A673 (cell line): ENCODE measurements at regions of chr17 and their contacts with region 1.

Region 1: GRCh38 chr17:44095642-44096496 is 25.3 kb downstream of the G6PC3 start:
- DNase-seq: peak; percentile 94
- H3K4me3 ChIP-seq: peak overlapping the region; percentile 24
- H3K27ac ChIP-seq: peak overlapping the region; percentile 97
- H3K4me1 ChIP-seq: peaks cover 25% of the 10 kb centered on the region
- H3K27me3 ChIP-seq: no peaks in the 10 kb centered on the region
- CTCF ChIP-seq: no peak

Region 2: GRCh38 chr17:43857942-43858600 is 237.8 kb before region 1 on chr17:
- CTCF ChIA-PET with region 1: no interaction called
- POLR2A ChIA-PET with region 1: interaction called, 13 read pairs
- intact Hi-C with region 1: no loop called
- DNase-seq: no peak
- H3K4me3 ChIP-seq: no peak overlapping the region
- H3K27ac ChIP-seq: no peak overlapping the region
- H3K4me1 ChIP-seq: no peaks in the 10 kb centered on the region
- H3K27me3 ChIP-seq: no peaks in the 10 kb centered on the region
- CTCF ChIP-seq: no peak

Region 3: DNA sequence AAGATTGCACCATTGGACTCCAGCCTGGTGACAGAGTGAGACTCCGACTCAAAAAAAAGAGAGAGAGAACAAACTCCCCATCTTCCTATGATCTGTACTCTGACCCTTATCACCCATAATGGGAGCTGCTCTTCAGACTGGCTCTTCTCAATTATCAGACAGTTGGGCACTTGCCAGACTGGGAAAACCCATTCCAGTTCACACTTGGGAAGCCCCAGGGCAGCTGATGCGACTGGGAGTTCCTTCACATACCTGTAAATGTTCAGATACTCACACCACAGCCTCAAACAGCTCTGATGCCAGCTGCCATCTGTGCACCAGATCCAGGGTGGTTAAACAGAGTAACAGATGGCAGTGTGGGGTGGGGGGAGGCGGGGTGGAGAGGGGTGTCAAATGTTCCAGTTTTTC is 57.3 kb before region 1 on chr17:
- CTCF ChIA-PET with region 1: no interaction called
- POLR2A ChIA-PET with region 1: no interaction called
- intact Hi-C with region 1: no loop called
- DNase-seq: no peak
- H3K4me3 ChIP-seq: no peak overlapping the region
- H3K27ac ChIP-seq: no peak overlapping the region
- H3K4me1 ChIP-seq: peaks cover 4% of the 10 kb centered on the region
- H3K27me3 ChIP-seq: no peaks in the 10 kb centered on the region
- CTCF ChIP-seq: no peak

Region 4: DNA sequence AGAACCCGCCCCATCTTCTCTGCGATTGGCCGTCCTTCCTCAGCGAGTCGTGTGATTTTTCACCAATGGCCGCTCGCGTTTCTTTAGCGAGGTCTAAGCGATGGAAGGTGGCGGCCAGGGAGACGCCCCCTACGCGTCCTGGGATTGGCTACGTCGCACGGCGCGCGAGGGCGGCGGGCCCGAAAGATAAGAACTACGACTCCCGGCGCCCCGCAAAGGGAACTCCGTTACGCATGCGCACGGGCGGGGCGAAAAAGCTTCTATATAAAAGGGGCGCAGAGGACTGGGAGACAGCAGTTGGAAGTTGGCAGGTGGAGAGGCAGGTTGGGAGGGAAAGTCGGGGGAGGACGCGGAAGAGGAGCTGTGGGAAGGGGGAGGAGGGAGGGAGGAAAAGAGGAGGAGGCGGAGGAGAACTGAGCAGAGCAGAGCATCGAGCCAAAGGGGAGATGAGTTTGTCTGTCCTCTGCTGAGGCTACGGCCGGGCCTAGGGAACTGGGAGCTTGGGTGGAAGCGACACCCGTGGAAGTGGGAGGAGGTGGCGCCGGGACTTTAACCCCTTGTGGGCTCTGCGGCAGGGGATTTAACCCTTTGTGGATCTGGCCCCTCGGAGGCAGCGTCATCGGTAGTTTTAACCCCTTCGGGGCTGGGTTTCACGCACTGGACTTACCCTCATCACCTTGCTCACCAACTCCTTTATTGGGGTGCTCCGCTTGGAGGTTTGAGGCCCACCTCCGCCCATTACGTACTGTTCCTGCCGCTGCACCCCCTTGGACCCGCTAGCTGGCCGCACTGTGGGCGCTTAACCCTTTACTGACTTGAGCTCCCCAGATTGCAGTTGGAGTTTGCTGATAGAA is 1052.5 kb after region 1 on chr17 and contains the start of gene HEXIM1:
- CTCF ChIA-PET with region 1: no interaction called
- POLR2A ChIA-PET with region 1: interaction called, 16 read pairs
- intact Hi-C with region 1: no loop called
- DNase-seq: peak; percentile 98
- H3K4me3 ChIP-seq: peak within 1 kb of the TSS; percentile 81
- H3K27ac ChIP-seq: peak within 1 kb of the TSS; percentile 98
- H3K4me1 ChIP-seq: peaks cover 19% of the 10 kb centered on the region
- H3K27me3 ChIP-seq: no peaks in the 10 kb centered on the region
- CTCF ChIP-seq: no peak
- total RNA-seq, gene HEXIM1: 21.2 and 22.1 TPM in 2 replicates